ENCODE measurements at regions of chr11 and their contacts with region 1.

Region 1: DNA sequence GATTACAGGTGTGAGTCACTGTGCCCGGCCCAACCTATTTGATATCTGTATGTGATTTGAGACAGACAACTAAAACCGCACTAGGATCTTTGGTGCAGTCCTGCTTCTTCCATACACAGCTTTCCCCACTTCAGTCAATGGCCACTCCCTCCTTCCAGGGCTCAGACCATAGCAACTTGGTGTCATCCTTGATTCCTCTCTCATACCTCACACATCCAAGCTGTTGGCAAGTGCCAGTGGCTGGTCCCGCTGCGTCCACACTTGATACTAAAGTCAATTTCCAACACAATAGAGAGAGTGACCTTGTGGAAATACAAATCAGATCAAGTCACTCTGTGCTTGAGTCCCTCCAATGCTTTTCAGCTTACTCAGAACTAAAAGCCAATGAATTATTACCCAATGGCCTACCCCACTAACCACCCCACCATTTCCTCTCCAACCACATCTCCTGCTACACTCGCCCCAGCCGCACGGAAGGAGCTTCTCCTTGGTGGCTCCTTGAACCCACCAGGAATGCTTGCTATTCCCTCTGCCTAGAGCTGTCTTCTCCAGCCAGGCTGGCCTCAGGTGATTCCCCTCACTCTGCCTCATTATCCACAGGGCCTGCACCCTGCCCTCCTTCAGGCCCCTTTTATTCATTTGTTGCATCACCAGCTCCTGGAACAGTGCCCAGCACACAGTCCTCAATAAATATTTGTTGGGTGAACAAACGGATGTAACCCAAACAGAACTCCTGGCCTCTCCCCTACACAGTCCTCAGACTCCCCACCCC is 12.9 kb downstream of the ABTB2 start:
- DNase-seq: peak; percentile 40 to 67 (median 64)
- H3K4me3 ChIP-seq: no peak overlapping the region
- H3K27ac ChIP-seq: no peak overlapping the region
- H3K4me1 ChIP-seq: peaks cover 0 to 20% (median 10%) of the 10 kb centered on the region in 4 experiments
- H3K27me3 ChIP-seq: no peaks in the 10 kb centered on the region

Region 2: DNA sequence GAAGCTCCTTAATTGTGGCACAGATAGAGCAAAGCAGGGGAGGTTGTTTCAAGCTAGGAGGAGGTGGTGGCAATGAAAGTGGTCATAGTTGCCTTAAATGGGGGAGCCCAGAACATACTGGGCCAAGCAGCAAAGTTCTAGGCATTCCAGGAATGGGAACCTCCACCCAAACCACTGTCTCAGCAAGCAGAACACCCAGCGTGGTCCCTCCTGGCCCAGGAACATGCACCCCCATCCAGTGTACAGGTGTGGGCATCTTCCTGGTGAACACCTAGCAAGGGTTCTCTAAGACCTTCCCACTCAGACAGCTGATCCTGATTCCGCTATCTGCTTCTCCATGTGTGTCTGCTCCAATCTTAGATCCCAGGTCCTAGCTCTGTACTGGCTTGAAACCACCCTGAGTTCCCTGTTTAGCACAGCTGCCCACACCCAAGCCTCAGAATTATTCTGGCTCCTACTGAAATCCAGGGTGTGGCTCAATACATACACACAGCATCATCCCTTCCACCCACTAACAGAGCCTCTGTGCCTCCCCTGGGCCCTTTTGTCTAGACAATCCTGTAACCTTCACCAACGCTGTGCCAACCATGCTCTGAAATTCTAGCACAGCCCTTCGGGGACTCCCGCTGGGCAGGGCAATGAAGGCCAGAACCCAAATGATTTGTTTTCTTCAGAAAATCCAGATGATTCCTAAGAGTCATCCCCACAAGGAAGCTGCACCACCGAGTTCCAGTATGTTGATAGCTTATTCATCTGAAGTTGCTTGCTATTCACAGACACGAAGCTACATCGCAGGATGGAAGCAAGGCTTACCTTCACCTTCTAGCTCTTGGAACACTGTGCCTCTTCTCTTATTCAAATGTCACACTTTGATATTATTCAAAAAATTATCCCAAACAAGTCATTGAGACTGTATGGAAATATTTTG is 63.7 kb before region 1 on chr11:
- CTCF ChIA-PET with region 1: no interaction called
- POLR2A ChIA-PET with region 1: no interaction called
- DNase-seq: no peak
- H3K4me3 ChIP-seq: no peak overlapping the region
- H3K27ac ChIP-seq: no peak overlapping the region
- H3K4me1 ChIP-seq: peaks cover 0 to 5% (median 0%) of the 10 kb centered on the region in 4 experiments
- H3K27me3 ChIP-seq: no peaks in the 10 kb centered on the region

Region 3: DNA sequence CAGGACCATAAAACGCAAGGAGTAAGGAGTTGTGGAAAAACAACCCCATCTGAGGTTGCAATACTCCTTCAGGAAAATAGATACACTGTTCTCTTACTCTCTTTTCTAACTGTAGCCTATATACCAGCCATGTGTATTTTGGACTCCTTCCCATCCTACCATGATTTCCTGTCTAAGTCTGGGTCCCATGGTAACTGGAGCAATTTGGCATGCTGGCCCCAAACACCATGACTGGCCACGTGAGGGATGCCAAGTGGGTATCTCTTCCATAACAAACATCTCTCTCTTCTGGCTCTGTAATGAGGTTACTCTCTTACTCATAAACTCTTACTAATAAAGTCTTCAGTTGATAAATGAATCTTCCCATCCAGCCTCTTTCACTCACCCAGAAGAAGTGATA is 13.6 kb before region 1 on chr11:
- CTCF ChIA-PET with region 1: no interaction called
- POLR2A ChIA-PET with region 1: no interaction called
- DNase-seq: no peak
- H3K4me3 ChIP-seq: no peak overlapping the region
- H3K27ac ChIP-seq: no peak overlapping the region
- H3K4me1 ChIP-seq: peaks cover 2 to 19% (median 11%) of the 10 kb centered on the region in 4 experiments
- H3K27me3 ChIP-seq: no peaks in the 10 kb centered on the region

Region 4: GRCh38 chr11:34357701-34358257 is 12.8 kb after region 1 on chr11 and contains the start of gene ABTB2:
- CTCF ChIA-PET with region 1: interaction called, 51 read pairs
- POLR2A ChIA-PET with region 1: interaction called, 3 read pairs
- DNase-seq: peak; percentile 95 to 98 (median 98)
- H3K4me3 ChIP-seq: peak within 1 kb of the TSS; percentile 22 to 90 (median 74)
- H3K27ac ChIP-seq: no peak within 1 kb of the TSS
- H3K4me1 ChIP-seq: peaks cover 3 to 40% (median 32%) of the 10 kb centered on the region in 4 experiments
- H3K27me3 ChIP-seq: peaks cover 0 to 38% (median 16%) of the 10 kb centered on the region in 5 experiments